ENCODE measurements at regions of chr5 and their contacts with region 1.

Region 1: GRCh38 chr5:69083412-69083811 is 10.4 kb upstream of the SLC30A5 start:
- DNase-seq: peak; percentile 62
- ATAC-seq: peak; percentile 96
- H3K4me3 ChIP-seq: no peak overlapping the region
- H3K27ac ChIP-seq: no peak overlapping the region
- H3K4me1 ChIP-seq: peaks cover 12% of the 10 kb centered on the region
- H3K27me3 ChIP-seq: no peaks in the 10 kb centered on the region
- CTCF ChIP-seq: peak; percentile 55
- EP300 ChIP-seq: no peak
- POLR2A ChIP-seq: no peak
- RAD21 ChIP-seq: peak; percentile 64

Region 2: DNA sequence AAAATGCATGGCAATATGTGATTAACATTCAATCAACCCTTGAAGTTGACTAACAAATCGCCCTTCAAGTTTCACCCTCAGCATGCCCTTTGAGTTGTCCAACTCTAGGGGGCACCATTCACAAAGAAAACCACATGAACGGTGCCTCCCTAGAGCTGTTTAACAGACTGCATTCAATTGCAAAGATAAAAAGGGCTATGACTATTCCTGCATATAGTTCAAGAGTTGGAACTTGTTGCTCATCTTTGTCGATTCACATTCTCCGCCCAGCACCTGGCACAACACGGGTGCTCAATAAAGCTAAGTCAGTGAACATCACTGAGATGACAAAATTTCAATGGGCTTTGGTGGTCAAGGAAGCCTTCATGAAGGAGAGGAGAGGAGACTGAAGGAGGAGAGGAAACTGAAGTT is 59.2 kb before region 1 on chr5:
- CTCF ChIA-PET with region 1: no interaction called
- POLR2A ChIA-PET with region 1: no interaction called
- in situ Hi-C with region 1: no loop called
- intact Hi-C with region 1: loop called (anchors 1 kb)
- DNase-seq: peak; percentile 58
- ATAC-seq: peak; percentile 90
- H3K4me3 ChIP-seq: no peak overlapping the region
- H3K27ac ChIP-seq: no peak overlapping the region
- H3K4me1 ChIP-seq: no peaks in the 10 kb centered on the region
- H3K27me3 ChIP-seq: no peaks in the 10 kb centered on the region; a peak in 1 of 5 replicates
- CTCF ChIP-seq: peak; percentile 84
- EP300 ChIP-seq: no peak
- POLR2A ChIP-seq: no peak
- RAD21 ChIP-seq: peak; percentile 82

Region 3: DNA sequence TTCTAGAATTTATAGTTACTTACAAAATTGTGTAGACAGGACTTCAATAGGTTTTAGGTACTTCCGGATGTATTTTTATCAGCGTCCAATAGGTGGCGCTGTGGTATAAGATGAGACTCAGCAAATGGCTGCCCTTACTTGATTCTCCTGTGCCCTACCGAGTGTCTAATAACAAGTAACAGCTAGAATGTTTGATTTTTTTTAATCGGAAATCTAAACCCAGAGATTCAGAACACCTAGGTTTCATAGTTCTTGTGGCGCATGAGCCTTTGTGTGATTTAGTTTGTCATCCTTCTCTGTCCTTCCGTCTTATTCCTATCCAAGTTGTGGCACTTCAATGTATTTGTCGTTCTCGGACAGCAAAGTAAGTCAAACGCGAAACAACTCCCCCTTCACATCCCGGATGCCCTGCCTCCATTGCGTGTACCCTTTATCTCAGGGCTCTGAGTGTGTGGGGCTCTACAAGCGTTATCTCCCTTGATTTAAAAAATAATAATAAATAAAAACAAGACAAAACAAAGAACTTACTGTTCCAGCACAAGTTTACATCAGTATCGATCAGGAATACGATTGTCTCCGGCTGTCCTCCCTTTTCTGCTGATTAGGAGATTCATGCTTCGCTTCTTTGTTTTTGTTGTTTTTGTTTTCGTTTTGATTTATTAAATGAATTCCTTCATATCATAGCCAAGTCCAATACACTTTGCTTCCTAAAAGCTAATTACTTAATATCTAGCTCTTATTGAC is 40.3 kb before region 1 on chr5:
- CTCF ChIA-PET with region 1: interaction called, 16 read pairs
- POLR2A ChIA-PET with region 1: interaction called, 3 read pairs
- in situ Hi-C with region 1: no loop called
- intact Hi-C with region 1: loop called (anchors 1 kb)
- DNase-seq: peak; percentile 87
- ATAC-seq: peak; percentile 87
- H3K4me3 ChIP-seq: peak overlapping the region; percentile 76 to 84 (median 77)
- H3K27ac ChIP-seq: peak overlapping the region; percentile 37
- H3K4me1 ChIP-seq: peaks cover 28% of the 10 kb centered on the region
- H3K27me3 ChIP-seq: no peaks in the 10 kb centered on the region
- CTCF ChIP-seq: peak; percentile 84
- EP300 ChIP-seq: no peak
- POLR2A ChIP-seq: no peak
- RAD21 ChIP-seq: peak; percentile 83

Region 4: GRCh38 chr5:69206528-69207190 is 123.2 kb after region 1 on chr5:
- CTCF ChIA-PET with region 1: no interaction called
- POLR2A ChIA-PET with region 1: no interaction called
- in situ Hi-C with region 1: no loop called
- intact Hi-C with region 1: no loop called
- DNase-seq: peak; percentile 57
- ATAC-seq: peak; percentile 68
- H3K4me3 ChIP-seq: no peak overlapping the region
- H3K27ac ChIP-seq: no peak overlapping the region
- H3K4me1 ChIP-seq: peaks cover 8% of the 10 kb centered on the region
- H3K27me3 ChIP-seq: no peaks in the 10 kb centered on the region
- CTCF ChIP-seq: no peak
- EP300 ChIP-seq: 0 out of 4 replicates have a peak, but pooled peaks of 1 of the 2 experiments have one; percentile 23
- POLR2A ChIP-seq: no peak
- RAD21 ChIP-seq: no peak

Region 5: DNA sequence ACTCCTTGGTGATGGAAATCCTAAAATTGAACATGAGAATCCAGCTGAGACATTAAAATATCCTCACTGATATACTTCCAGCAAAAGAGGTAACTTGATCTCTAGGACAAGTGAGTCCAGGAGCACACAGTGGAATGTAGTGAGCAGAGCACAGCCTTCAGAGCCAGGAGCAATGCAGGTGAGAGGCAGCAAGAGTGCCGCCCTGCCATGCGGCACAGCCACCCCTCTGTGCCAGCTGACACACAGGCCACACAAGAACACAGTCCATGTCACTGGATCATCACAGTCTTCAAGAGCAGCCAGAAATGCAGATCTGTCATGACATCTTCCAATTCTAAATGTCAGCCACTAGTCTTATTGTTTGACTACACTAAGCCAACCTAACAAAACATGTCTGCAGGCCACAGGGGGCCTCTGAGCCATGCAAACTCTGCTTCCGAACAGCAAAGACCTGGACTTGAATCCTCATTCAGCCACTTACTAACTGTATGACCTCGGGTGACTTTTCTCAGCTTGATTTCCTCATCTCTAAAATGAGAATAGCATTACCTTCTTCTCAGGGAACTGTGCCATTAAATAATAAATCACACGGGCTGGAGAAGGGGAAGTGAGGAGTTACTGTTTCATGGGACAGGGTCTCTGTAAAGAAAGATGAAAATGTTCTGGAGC is 202.2 kb after region 1 on chr5:
- CTCF ChIA-PET with region 1: no interaction called
- POLR2A ChIA-PET with region 1: no interaction called
- in situ Hi-C with region 1: no loop called
- intact Hi-C with region 1: no loop called
- DNase-seq: no peak
- ATAC-seq: peak; percentile 48; the same call in 2 of the 3 replicates
- H3K4me3 ChIP-seq: no peak overlapping the region
- H3K27ac ChIP-seq: no peak overlapping the region
- H3K4me1 ChIP-seq: no peaks in the 10 kb centered on the region
- H3K27me3 ChIP-seq: no peaks in the 10 kb centered on the region
- CTCF ChIP-seq: no peak
- EP300 ChIP-seq: no peak
- POLR2A ChIP-seq: no peak
- RAD21 ChIP-seq: no peak

Region 6: DNA sequence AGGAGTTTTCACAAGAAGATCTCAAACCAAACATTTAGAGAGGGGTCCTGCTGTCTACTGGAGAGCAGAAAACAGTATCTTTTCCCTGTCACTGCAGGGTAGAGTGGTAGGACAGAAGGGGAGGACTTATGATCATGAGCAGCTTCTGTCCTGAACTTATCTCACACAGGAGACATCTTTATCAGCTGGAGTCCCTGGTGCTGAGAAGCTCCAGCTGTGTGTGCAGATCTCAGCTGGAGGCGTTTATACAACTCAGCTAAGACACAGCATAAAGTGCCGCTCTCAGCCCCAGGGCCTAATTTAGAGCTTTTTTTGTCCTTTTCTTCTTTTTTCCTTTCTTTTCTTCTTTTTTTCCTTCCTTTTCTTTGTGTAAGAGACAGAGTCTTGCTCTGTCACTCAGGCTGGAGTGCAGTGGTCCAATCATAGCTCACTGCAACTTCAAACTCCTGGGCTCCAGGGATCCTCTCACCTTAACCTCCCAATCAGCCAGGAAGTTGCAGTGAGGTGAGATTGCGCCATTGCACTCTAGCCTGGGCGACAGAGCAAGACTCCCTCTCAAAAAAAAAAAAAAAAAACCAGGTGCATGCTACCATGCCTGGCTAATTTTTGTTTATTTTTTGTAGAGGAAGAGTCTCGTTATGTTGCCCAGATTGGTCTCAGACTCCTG is 217.3 kb after region 1 on chr5:
- CTCF ChIA-PET with region 1: no interaction called
- POLR2A ChIA-PET with region 1: no interaction called
- in situ Hi-C with region 1: no loop called
- intact Hi-C with region 1: no loop called
- DNase-seq: no peak
- ATAC-seq: no peak
- H3K4me3 ChIP-seq: no peak overlapping the region
- H3K27ac ChIP-seq: no peak overlapping the region
- H3K4me1 ChIP-seq: no peaks in the 10 kb centered on the region
- H3K27me3 ChIP-seq: no peaks in the 10 kb centered on the region
- CTCF ChIP-seq: no peak
- EP300 ChIP-seq: no peak
- POLR2A ChIP-seq: no peak
- RAD21 ChIP-seq: no peak

Measured in HepG2 (cell line).